ENCODE measurements at regions of chr10 and their contacts with region 1.

Region 1: DNA sequence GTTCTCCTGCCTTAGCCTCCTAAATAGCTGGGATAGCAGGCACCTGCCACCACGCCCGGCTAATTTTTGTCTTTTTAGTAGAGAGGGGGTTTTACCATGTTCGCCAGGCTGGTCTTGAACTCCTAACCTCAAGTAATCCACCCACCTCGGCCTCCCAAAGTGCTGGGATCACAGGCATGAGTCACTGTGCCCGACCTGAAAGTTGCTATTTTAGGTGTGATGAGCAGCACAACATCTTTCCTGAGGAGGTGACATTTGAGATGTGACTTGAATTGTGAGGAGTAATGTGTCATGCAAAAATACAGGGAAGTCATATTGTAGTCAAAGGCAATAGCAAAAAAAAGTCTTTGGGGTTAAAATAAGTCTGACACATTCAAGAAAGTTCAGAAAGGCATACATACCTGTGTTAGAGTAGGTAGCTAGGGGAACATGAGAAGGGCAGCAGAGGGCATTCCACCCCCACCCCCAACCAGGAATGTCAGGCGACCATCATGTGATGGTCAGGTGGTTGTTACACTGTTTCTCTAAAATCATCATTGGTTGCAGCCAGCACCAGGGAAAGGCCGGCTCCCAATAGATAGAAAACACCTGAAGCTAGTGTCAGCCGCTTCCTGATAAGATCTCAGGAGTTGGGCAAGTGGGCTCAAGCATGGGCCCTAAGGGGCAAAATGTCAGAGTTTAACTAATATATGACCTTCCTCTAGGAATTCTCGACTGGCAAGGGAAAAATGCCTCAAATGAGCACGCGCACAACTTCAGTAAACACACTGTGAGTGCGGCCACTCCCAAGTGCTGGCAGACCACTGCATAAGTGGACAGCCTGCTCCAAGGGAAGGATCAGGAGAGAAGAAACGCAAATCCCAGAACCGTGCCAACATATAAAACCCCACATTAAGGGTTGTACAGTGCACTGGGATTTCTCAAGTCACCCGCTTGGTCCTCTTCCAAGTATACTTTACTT is at the start of gene TACC2:
- DNase-seq: no peak
- ATAC-seq: no peak
- total RNA-seq, gene TACC2: 349 TPM

Region 2: DNA sequence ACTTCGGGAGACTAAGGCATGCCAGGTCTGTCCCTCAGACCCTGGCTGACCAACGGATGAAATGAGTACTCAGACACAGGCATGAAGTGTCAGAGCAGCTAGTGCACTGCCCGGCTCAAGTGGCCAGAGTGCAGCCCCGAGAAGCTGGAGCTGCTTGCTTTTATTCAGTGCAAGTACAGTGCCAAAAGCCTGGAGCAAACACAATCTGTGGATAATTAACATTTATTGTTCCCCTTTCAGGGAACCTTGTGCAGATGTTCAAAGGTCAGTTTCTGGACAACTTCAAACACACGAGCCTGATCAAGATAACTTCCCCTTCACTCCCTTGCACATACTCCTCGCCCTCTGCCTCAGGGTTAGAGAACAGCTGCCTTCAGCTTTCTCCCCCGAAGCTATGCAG is 52.9 kb before region 1 on chr10:
- intact Hi-C with region 1: loop called (anchors 10 kb)
- DNase-seq: no peak
- ATAC-seq: peak; percentile 25

Region 3: DNA sequence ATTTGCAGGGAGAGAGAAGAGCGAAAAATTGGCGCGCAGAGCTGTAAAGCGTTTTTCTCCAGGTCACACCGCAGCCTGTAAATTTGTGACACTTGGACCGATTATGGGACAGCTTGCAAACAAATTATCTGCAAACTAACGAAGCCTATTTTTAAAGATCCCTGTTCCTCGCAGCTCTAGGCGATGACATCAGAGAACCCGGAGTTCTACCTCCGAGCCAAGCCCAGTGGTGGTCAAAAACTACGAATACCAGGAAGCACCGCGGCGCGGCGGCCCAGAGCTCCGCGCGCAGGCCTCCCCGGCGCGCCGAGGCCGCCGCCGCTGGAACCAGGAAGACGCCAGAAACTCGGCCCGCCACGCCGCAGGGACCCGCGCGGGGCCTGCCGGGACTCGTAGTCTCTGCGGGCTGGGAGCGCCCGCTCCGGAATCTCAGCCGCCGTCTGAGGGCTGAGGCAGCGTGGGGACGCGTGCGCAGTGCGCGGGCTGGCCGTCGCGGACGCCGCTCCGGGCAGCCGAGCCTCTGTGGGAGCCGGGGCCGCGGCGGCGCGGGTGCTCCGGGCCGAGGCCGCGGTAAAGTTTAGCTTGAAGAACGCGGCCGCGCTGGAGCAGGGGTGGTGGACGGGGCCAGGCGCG is 385.7 kb after region 1 on chr10 and contains the start of gene PLEKHA1:
- intact Hi-C with region 1: no loop called
- DNase-seq: peak; percentile 98
- ATAC-seq: peak; percentile 90
- total RNA-seq, gene PLEKHA1: 74.4 TPM

Measured in Right ventricle myocardium superior (tissue), 1 donor.